ENCODE measurements at regions of chr11 and their contacts with region 1.

Region 1: DNA sequence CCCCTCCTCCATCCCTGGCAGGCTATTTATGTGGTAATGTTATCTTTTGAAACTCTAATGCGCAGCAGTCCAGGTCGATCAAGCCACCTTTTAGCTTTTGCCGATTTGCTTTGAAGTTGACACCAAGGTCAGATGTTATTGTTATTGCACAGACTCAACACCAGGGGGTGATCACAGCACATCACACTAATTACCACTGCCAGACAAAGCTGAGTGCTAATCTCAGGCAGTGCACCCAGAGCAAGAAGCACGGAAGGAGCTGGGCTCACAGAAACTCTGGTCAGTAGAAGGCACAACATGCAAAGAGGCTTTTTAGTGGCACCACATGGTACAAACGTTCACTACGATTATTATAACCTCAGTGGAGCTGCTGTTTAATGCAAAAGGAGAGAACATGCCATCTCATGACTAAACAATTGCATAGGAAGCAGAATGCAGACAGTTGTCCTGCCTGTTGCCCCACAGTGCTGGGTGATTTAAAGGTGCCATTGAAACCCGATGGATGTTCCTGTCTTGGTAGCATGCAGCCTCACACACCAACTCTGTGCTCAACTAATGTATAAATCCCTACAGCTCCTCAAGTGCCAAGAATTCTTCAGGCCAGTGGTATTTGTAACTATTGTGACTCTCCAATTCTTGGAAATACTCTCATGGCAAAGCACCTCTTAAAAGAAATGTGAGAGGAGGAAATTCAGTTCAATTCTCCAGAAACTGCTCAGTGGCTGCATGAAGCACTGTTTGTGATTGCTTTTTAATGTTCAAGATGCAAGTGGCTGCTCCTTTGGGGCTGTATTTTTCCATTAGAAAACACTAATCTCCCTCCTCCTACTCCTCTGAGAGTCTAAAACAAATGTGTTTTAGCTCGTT is 353.9 kb upstream of the DDI1 start:
- DNase-seq: peak; percentile 53 to 73
- H3K4me3 ChIP-seq: no peak overlapping the region
- H3K27ac ChIP-seq: no peak overlapping the region
- H3K4me1 ChIP-seq: peaks cover 3 to 6% (median 3%) of the 10 kb centered on the region in 4 experiments; a peak in 4 of 7 replicates
- H3K27me3 ChIP-seq: no peaks in the 10 kb centered on the region
- CTCF ChIP-seq: peak; percentile 38 to 95 (median 81)
- EP300 ChIP-seq: no peak
- POLR2A ChIP-seq: no peak
- RAD21 ChIP-seq: peak; percentile 98

Region 2: DNA sequence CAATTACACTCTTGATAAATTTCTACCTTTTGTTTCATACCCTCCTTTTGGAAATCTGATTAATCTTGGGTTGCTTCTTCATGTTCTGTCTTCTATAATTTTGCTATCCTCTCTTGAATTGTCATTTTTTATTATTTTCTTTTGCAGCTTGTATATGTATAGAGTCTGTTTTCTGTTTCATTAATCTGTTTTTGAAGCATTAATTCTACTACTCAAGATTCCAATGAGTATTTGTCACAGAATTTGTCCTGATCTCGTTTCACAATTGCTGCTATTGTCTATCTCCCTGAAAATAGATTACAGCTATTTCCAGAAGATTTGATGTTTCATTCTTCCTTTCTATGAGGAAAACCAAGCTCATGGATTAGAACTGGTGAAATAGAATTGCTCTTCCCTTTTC is 167.3 kb before region 1 on chr11:
- CTCF ChIA-PET with region 1: no interaction called
- POLR2A ChIA-PET with region 1: no interaction called
- DNase-seq: no peak
- H3K4me3 ChIP-seq: no peak overlapping the region
- H3K27ac ChIP-seq: no peak overlapping the region
- H3K4me1 ChIP-seq: no peaks in the 10 kb centered on the region
- H3K27me3 ChIP-seq: no peaks in the 10 kb centered on the region
- CTCF ChIP-seq: no peak
- EP300 ChIP-seq: no peak
- POLR2A ChIP-seq: no peak
- RAD21 ChIP-seq: no peak

Region 3: GRCh38 chr11:103552086-103552485 is 130.5 kb before region 1 on chr11:
- CTCF ChIA-PET with region 1: no interaction called
- POLR2A ChIA-PET with region 1: no interaction called
- DNase-seq: no peak
- H3K4me3 ChIP-seq: no peak overlapping the region
- H3K27ac ChIP-seq: no peak overlapping the region
- H3K4me1 ChIP-seq: no peaks in the 10 kb centered on the region
- H3K27me3 ChIP-seq: no peaks in the 10 kb centered on the region
- CTCF ChIP-seq: no peak
- EP300 ChIP-seq: no peak
- POLR2A ChIP-seq: no peak
- RAD21 ChIP-seq: no peak

Region 4: GRCh38 chr11:103671143-103671651 is 11.4 kb before region 1 on chr11:
- CTCF ChIA-PET with region 1: interaction called, 32 read pairs
- POLR2A ChIA-PET with region 1: no interaction called
- DNase-seq: no peak
- H3K4me3 ChIP-seq: no peak overlapping the region
- H3K27ac ChIP-seq: no peak overlapping the region
- H3K4me1 ChIP-seq: no peaks in the 10 kb centered on the region
- H3K27me3 ChIP-seq: peaks cover 0 to 2% (median 0%) of the 10 kb centered on the region in 4 experiments; a peak in 2 of 7 replicates
- CTCF ChIP-seq: no peak
- EP300 ChIP-seq: no peak
- POLR2A ChIP-seq: no peak
- RAD21 ChIP-seq: no peak

Region 5: DNA sequence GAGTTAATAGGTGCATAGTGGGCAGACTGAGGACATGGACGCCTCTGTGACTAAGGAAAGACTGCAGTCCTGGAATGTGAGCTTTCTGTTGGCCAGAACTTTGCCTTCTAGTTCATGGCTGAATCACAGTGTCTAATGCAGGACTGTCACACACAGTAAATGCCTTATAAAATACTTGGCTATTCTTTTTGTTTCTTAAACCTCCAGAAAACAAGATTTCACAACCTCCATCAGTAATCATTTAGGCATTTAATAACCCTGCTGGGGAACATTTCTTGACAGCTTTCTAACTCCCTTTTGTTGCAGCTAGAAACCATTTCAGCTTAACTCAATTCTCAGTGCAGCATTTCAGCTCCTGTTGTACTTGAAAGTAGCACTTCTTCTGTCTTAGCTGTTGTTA is 18.1 kb after region 1 on chr11:
- CTCF ChIA-PET with region 1: interaction called, 29 read pairs
- POLR2A ChIA-PET with region 1: no interaction called
- DNase-seq: no peak
- H3K4me3 ChIP-seq: no peak overlapping the region
- H3K27ac ChIP-seq: no peak overlapping the region
- H3K4me1 ChIP-seq: 0 out of 7 replicates have a peak, but pooled peaks cover 0 to 2% (median 0%) of the 10 kb centered on the region in 4 experiments
- H3K27me3 ChIP-seq: no peaks in the 10 kb centered on the region
- CTCF ChIP-seq: no peak
- EP300 ChIP-seq: no peak
- POLR2A ChIP-seq: no peak
- RAD21 ChIP-seq: no peak

Region 6: GRCh38 chr11:103737747-103738146 is 55.2 kb after region 1 on chr11:
- CTCF ChIA-PET with region 1: interaction called, 10 read pairs
- POLR2A ChIA-PET with region 1: interaction called, 7 read pairs
- DNase-seq: no peak
- H3K4me3 ChIP-seq: no peak overlapping the region
- H3K27ac ChIP-seq: no peak overlapping the region
- H3K4me1 ChIP-seq: peaks cover 0 to 6% (median 4%) of the 10 kb centered on the region in 4 experiments; a peak in 4 of 7 replicates
- H3K27me3 ChIP-seq: no peaks in the 10 kb centered on the region
- CTCF ChIP-seq: no peak
- EP300 ChIP-seq: no peak
- POLR2A ChIP-seq: no peak
- RAD21 ChIP-seq: no peak

Region 7: DNA sequence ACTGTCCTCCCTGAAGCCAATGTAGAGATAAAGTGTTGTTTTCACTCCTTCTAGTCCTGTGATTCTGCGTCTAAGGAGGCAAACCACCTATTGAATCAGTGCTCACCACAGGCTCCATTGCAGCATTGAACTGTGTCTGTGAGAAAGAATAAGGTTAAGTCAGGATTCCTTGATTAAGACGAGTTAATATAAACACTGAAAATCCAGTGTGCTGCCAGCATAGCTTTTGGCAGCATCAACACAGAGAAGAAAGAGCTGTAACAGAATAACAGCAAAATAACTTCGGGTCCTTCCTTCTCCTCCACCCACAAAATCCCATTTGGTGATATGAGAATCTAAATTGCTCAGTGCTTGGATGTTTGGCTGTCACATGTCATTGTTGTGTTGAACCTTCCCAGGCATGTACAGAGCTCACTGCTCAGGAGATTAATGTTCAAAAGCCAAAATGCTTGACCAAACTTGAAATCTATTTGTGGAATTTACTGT is 168.7 kb after region 1 on chr11:
- CTCF ChIA-PET with region 1: interaction called, 11 read pairs
- POLR2A ChIA-PET with region 1: no interaction called
- DNase-seq: no peak
- H3K4me3 ChIP-seq: no peak overlapping the region
- H3K27ac ChIP-seq: no peak overlapping the region
- H3K4me1 ChIP-seq: no peaks in the 10 kb centered on the region
- H3K27me3 ChIP-seq: no peaks in the 10 kb centered on the region
- CTCF ChIP-seq: no peak
- EP300 ChIP-seq: no peak
- POLR2A ChIP-seq: no peak
- RAD21 ChIP-seq: no peak

Region 8: DNA sequence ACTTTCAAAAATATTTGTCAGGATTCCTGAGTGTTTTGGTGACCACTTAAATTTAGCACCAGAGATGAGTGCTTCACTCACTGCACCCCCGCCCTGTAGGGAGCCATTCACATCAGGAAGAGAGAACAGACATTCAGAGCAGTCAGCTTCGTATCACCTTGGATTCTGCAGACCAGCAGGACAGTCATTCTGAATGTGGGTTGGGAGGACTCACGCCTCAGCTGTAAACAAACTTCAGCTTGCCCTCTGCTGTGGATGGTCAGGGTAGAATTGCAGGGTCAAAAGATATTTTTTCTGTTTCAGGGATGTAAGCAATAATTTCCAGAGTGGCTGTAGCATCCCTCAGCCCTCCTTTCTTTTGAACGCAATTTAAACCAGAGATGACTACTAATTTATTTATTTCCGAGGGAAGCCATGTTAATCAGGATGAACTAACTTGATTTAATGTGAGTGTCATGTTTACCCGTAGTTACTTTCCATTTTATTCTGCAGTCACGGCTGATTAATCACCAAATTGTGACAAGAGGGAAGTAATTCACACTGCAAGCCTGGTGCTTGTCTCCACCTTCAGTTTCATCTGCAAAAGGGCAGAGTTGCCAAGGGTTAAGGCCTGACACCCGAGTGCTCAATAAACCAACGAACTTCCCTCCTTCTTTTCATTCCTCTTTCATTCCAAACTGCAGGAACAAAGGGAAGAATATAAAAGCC is 179.7 kb after region 1 on chr11:
- CTCF ChIA-PET with region 1: interaction called, 13 read pairs
- POLR2A ChIA-PET with region 1: no interaction called
- DNase-seq: no peak
- H3K4me3 ChIP-seq: no peak overlapping the region
- H3K27ac ChIP-seq: no peak overlapping the region
- H3K4me1 ChIP-seq: peaks cover 0 to 3% (median under 1%) of the 10 kb centered on the region in 4 experiments; a peak in 3 of 7 replicates
- H3K27me3 ChIP-seq: no peaks in the 10 kb centered on the region
- CTCF ChIP-seq: no peak
- EP300 ChIP-seq: no peak
- POLR2A ChIP-seq: no peak
- RAD21 ChIP-seq: peak; percentile 18 to 22; a peak in 2 of 4 replicates

Region 9: DNA sequence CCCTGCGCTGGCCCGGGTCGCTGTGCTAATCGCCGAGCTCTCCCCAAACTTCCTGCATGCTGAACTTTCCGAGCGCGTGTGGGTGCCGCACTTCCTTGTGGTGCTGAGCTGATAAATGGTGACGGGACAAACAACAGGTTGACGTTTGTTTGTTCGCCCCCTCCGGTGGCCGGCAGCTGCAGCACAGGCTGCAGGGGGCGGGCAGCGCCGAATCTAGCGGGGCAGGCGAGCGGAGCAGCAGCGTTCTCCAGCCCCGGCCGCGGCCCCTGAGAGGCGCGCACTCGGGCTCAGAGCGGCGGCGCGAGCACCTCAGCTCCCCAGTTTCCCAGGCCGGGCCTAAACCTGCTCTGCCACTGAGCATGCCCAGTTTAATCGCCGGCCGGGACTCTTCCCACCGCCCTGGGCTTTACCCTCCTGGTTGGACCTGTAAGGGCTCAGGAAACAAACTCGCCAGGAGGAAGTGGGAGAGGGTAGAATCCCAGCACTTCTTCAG is 481.5 kb after region 1 on chr11 and contains the start of gene PDGFD:
- CTCF ChIA-PET with region 1: interaction called, 22 read pairs
- POLR2A ChIA-PET with region 1: no interaction called
- DNase-seq: peak; percentile 76 to 85
- H3K4me3 ChIP-seq: peak within 1 kb of the TSS; percentile 67 to 89 (median 78)
- H3K27ac ChIP-seq: no peak within 1 kb of the TSS
- H3K4me1 ChIP-seq: peaks cover 0 to 8% (median 3%) of the 10 kb centered on the region in 4 experiments; a peak in 5 of 7 replicates
- H3K27me3 ChIP-seq: no peaks in the 10 kb centered on the region; a peak in 1 of 7 replicates
- CTCF ChIP-seq: peak; percentile 53 to 66 (median 58)
- EP300 ChIP-seq: no peak
- POLR2A ChIP-seq: peak in 1 of 2 experiments; percentile 67; a peak in 1 of 3 replicates
- RAD21 ChIP-seq: peak in 1 of 2 experiments; percentile 41; a peak in 3 of 4 replicates
- total RNA-seq, gene PDGFD: 3.8 and 3.9 TPM in 2 replicates